Activated CD4-positive, alpha-beta memory T cell treated with anti-CD3 and anti-CD28 coated beads, Interleukin-2, amount 10 ng/mL, durations not matched to agents 7 days and 5 days (primary cell): ENCODE measurements at regions of chr13 and their contacts with region 1.

Region 1: DNA sequence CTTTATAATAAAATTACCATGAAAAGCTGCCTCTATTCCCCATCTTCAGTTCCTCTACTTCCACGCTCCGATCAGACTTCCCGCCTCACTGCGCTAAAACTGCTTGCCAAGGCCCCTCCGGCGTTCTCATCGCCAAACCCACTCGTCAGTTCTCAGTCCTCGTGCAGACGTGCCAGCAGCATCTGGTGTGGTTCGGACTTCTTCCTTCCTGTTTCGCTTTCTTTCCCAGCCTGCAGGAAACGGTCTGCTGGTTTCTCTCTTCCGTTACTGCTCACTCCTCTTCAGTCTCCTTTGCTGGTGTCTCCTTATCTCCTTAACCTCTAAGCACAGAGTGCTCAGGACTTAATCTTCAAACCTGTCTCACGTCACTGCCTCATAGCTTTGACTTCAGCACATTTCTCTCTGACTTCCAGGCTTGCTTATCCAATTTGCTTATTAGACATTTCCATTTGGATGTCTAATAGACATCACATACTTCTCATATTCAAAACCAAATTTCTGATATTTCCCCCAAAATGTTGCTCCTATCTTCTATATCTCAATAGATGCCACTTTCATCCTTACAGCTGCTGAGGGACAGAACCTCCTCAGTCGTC is 40.3 kb downstream of the RCBTB2 start:
- DNase-seq: peak; percentile 85
- H3K4me3 Mint-ChIP-seq: no peak overlapping the region
- H3K27ac Mint-ChIP-seq: no peak overlapping the region
- H3K4me1 Mint-ChIP-seq: peaks cover 69% of the 10 kb centered on the region
- H3K27me3 Mint-ChIP-seq: no peaks in the 10 kb centered on the region

Region 2: DNA sequence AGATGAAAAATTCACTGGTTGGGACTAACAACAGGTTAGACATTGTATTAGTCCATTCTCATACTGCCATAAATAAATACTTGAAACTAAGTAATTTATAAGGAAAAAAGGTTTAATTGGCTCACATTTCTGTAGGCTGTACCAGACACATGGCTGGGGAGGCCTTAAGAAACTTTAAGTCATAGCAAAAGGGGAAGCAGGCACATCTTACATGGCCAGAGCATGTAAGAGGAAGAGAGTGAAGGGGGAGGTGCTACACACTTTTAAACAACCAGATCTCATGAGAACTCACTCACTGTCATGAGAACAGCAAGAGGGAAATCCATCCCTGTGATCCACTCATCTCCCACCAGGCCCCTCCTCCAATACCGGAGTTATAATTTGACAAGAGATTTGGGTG is 617.4 kb before region 1 on chr13:
- CTCF ChIA-PET with region 1: no interaction called
- POLR2A ChIA-PET with region 1: no interaction called
- DNase-seq: no peak
- H3K4me3 Mint-ChIP-seq: no peak overlapping the region
- H3K27ac Mint-ChIP-seq: no peak overlapping the region
- H3K4me1 Mint-ChIP-seq: no peaks in the 10 kb centered on the region
- H3K27me3 Mint-ChIP-seq: no peaks in the 10 kb centered on the region

Region 3: DNA sequence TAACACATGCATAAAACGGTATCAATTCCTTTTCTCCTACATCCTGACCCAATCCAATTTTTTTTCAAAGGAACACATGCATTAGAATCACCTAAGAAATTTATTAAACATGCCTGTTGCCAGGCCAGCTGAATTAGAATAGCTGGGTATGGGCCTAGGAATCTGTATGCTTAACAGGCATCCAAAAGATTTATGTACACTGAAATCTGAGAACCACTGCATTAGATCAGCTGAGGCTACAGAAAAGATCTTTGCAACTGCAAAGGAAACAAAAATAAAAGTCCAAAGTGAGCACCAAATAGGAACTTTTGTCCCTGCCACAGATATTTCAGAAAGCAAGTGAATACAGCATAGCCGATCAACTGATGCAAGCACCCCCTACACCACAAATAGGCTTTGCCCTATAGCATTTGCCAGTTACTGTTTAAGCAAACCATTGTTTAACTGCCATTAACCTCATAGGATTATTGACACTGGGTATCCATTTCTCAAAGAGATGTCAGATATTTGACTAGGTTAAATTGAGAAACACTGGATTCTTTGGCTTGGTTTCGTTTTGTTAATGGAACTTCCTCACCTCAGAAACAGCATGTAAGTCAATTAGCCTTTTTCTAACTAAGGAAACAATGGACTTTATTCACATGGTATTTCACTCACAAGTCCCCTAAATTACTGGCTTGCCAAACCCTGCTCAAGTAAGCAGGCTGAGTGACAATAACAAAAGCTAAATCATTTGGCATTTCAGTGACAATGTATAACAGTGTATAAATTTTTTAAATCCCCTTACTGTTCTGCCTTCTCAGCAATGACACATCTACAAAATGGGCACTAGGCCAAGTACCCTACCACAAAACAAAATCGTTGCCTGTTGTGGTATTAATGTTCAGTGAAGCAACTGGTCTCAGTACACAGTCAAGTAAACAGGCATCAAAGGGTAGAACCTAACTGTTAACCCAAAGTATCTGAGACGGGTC is 559.3 kb before region 1 on chr13:
- CTCF ChIA-PET with region 1: no interaction called
- POLR2A ChIA-PET with region 1: no interaction called
- DNase-seq: no peak
- H3K4me3 Mint-ChIP-seq: no peak overlapping the region
- H3K27ac Mint-ChIP-seq: no peak overlapping the region
- H3K4me1 Mint-ChIP-seq: no peaks in the 10 kb centered on the region
- H3K27me3 Mint-ChIP-seq: no peaks in the 10 kb centered on the region

Region 4: DNA sequence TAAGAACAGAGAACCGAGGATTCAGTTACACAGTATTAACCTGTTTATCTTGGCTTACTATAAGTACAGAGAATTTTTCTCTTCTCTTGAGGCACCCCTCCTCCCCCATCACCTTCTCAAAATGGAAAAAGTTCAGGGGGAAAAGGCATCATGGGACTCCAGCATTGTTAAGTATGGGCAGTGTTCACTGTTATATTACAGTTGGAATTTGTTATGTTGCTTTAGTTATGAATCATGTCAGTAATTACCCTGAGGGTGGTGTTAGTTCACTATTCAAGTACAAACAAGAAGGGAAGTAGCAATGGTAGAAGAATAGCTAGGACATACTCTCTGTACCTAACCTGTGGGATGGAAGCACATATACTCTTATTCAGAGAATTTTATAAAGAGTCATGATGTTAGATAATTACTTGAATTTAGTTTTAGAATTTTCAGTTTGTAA is 91.7 kb before region 1 on chr13:
- CTCF ChIA-PET with region 1: interaction called, 5 read pairs
- POLR2A ChIA-PET with region 1: interaction called, 22 read pairs
- DNase-seq: no peak
- H3K4me3 Mint-ChIP-seq: peak overlapping the region; percentile 38
- H3K27ac Mint-ChIP-seq: peak overlapping the region; percentile 74
- H3K4me1 Mint-ChIP-seq: peaks cover 61% of the 10 kb centered on the region
- H3K27me3 Mint-ChIP-seq: no peaks in the 10 kb centered on the region

Region 5: DNA sequence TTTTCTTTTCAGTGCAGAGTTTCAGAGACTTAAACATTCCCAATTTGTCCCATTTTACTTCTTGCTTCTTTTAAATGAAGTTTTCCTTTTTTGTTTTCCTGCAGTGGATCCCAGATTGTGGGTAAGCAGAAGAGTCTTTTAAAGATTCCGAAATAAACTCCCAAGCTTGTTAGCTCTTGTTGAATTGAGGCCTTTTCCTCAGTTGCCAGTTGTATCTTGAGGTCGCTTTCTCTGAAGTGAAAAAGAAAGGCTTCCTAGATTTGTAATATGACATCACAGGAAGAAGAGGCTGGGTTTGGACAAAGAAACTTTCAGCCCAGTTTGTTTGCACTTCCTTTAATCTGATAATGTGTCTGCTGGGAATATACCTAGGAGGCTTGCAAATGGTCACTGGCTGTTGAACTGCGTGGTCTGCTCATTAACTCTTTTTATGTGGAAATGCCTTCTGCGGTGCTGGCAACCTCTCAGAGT is 79.7 kb before region 1 on chr13 and contains the start of gene LPAR6:
- CTCF ChIA-PET with region 1: interaction called, 5 read pairs
- POLR2A ChIA-PET with region 1: interaction called, 55 read pairs
- DNase-seq: peak; percentile 26
- H3K4me3 Mint-ChIP-seq: peak within 1 kb of the TSS; percentile 99
- H3K27ac Mint-ChIP-seq: peak within 1 kb of the TSS; percentile 96
- H3K4me1 Mint-ChIP-seq: peaks cover 42% of the 10 kb centered on the region
- H3K27me3 Mint-ChIP-seq: no peaks in the 10 kb centered on the region
- total RNA-seq, gene LPAR6: 96.8 to 100 TPM

Region 6: GRCh38 chr13:48843630-48844380 is 351.2 kb after region 1 on chr13:
- CTCF ChIA-PET with region 1: no interaction called
- POLR2A ChIA-PET with region 1: no interaction called
- DNase-seq: no peak
- H3K4me3 Mint-ChIP-seq: no peak overlapping the region
- H3K27ac Mint-ChIP-seq: no peak overlapping the region
- H3K4me1 Mint-ChIP-seq: no peaks in the 10 kb centered on the region
- H3K27me3 Mint-ChIP-seq: peaks cover 3% of the 10 kb centered on the region